ENCODE measurements at regions of chr11 and their contacts with region 1.

Region 1: GRCh38 chr11:133163463-133164419 is 368.6 kb downstream of the OPCML start:
- DNase-seq: no peak
- H3K4me3 ChIP-seq: no peak overlapping the region
- H3K27ac ChIP-seq: no peak overlapping the region
- H3K4me1 ChIP-seq: peaks cover 2 to 5% (median 4%) of the 10 kb centered on the region in 4 experiments; a peak in 5 of 7 replicates
- H3K27me3 ChIP-seq: no peaks in the 10 kb centered on the region
- CTCF ChIP-seq: peak in 2 of 3 experiments; percentile 74 to 79; a peak in 3 of 4 replicates
- EP300 ChIP-seq: no peak
- POLR2A ChIP-seq: no peak
- RAD21 ChIP-seq: peak; percentile 73 to 74

Region 2: GRCh38 chr11:133149698-133150097 is 14.0 kb before region 1 on chr11:
- CTCF ChIA-PET with region 1: interaction called, 16 read pairs
- POLR2A ChIA-PET with region 1: no interaction called
- DNase-seq: no peak
- H3K4me3 ChIP-seq: no peak overlapping the region
- H3K27ac ChIP-seq: no peak overlapping the region
- H3K4me1 ChIP-seq: peaks cover 0 to 2% (median 0%) of the 10 kb centered on the region in 4 experiments; a peak in 2 of 7 replicates
- H3K27me3 ChIP-seq: no peaks in the 10 kb centered on the region
- CTCF ChIP-seq: peak in 1 of 3 experiments; percentile 12; a peak in 1 of 4 replicates
- EP300 ChIP-seq: no peak
- POLR2A ChIP-seq: no peak
- RAD21 ChIP-seq: no peak

Region 3: DNA sequence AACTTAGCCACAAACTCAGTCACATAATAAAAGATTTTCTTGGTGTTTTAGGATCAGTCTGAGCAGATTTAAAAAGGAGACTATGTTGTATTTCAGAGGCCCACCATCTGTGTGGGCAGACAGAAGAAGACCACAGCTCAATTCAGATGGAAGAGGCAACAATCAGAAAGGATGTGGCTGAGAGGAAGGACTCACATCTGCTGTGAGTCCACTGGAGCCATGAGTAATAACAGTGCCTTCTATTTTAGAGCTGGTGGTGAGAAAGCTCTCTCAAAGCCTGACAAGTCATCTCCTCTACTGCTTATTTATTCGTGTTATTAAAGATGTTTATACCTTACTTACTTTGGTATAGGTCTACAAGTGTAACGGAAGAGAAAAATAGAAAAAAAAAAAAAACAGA is 11.4 kb after region 1 on chr11:
- CTCF ChIA-PET with region 1: interaction called, 32 read pairs
- POLR2A ChIA-PET with region 1: interaction called, 5 read pairs
- DNase-seq: no peak
- H3K4me3 ChIP-seq: no peak overlapping the region
- H3K27ac ChIP-seq: no peak overlapping the region
- H3K4me1 ChIP-seq: no peaks in the 10 kb centered on the region
- H3K27me3 ChIP-seq: no peaks in the 10 kb centered on the region
- CTCF ChIP-seq: no peak
- EP300 ChIP-seq: no peak
- POLR2A ChIP-seq: no peak
- RAD21 ChIP-seq: no peak

Measured in H1 (cell line).